Activated T-helper 1 cell treated with anti-CD3 and anti-CD28 coated beads, Interleukin-12 subunit alpha, Interleukin-12 subunit beta, Interleukin-2, Interleukin-4 antibody, amounts not matched to agents 30 ng/mL and 10 ng/mL and 1 ng/mL, durations not matched to agents 14 hours and 24 hours and 36 hours (primary cell): ENCODE measurements at regions of chr15 and their contacts with region 1.

Region 1: GRCh38 chr15:69380100-69380727 is 33.9 kb upstream of the KIF23 start:
- DNase-seq: no peak
- H3K4me3 Mint-ChIP-seq: no peak overlapping the region
- H3K27ac Mint-ChIP-seq: no peak overlapping the region
- H3K4me1 Mint-ChIP-seq: no peaks in the 10 kb centered on the region
- H3K27me3 Mint-ChIP-seq: peaks cover 4% of the 10 kb centered on the region

Region 2: GRCh38 chr15:69119653-69120395 is 260.4 kb before region 1 on chr15:
- intact Hi-C with region 1: loop called (anchors 5 kb)
- DNase-seq: no peak
- H3K4me3 Mint-ChIP-seq: no peak overlapping the region
- H3K27ac Mint-ChIP-seq: no peak overlapping the region
- H3K4me1 Mint-ChIP-seq: no peaks in the 10 kb centered on the region
- H3K27me3 Mint-ChIP-seq: peaks cover 2% of the 10 kb centered on the region

Region 3: DNA sequence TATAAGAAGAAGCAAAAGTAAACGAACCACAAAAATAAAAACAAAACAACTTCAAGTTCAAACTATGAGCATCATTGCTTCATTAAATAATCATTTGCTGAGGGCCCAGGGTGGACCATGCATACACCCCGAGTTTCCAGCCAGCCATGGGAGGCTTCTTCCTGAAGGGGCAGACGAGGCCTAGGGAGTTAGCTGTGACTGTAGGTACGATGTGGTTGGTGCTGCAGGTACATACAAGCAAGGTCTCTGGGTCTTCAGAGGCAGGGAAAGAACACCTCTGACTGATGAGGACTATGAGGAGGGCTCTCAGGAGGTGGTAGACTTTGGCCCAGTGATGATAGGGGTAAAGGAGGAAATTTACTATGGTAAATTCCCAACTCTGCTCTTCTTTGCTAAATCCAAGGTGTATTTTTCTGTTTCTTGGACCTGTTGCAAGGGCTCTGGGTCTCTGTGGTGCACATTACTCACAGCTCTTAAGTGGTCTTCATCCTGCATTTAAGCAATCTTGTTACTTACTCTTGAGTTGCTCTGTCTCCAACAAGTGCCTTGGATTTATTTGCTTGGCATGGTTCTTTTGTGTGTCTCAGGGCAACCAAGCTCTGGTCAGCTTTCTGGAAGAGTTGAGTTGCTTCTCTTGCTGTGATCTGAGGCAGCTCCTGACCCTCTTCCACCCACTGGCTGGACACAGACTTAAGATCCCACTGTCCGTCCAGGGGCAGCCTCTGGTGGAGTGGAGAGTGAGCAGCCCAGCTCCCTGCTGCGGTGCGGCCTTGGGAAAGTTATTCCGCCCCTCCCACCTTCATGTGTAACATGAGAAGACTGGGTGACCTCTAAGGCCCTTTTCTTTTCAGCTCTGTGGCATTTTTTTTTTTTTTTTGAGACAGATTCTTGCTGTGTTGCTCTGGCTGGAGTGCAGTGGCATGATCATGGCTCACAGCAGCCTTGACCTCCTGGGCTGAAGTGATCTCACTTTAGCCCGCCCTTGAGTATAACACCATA is 22.1 kb before region 1 on chr15:
- intact Hi-C with region 1: no loop called
- DNase-seq: no peak
- H3K4me3 Mint-ChIP-seq: no peak overlapping the region
- H3K27ac Mint-ChIP-seq: no peak overlapping the region
- H3K4me1 Mint-ChIP-seq: no peaks in the 10 kb centered on the region
- H3K27me3 Mint-ChIP-seq: peaks cover 4% of the 10 kb centered on the region